ENCODE measurements at regions of chr1 and their contacts with region 1.

Region 1: DNA sequence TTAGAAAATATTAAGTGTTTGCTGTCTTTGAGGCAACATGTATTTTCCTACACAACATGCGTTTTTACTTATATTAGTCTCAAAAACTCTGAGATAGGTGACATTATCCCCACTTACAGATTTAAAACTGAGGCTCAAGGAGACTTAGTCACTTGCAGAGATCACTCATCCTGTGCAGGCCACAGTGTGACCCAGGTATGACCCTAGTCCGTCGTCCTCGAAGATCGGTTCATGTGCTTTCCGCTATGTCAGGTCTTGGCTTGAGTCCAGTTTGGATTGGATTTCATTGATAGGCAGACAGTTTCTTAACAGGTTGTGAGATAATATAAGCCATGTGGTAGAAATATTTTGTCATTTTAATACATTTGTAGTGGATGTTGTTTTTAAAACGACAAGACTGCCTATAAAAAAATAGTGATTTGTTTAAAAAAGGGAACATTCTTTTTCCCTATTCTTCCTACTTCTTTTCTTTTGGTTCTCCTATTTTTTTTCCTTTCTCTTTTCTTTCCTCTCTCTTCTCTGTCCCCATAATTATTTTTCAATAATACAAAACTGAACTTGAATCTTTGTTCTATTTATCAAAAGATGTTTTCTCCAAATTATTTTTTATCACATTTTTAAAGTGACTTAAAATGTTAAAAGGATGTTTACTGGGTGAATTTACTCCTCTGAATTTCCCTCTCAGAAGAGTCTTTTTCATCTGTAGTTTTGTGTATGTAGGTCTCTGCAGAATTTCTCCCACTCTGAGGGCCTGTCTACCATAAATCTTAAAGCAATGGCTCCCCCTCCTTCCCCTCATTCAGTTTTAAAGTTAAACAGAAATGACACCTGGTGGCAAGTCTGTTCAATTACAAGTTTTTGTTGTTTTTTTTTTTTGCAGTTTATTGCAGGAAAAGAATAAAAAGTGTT is 81.8 kb downstream of the PHTF1 start:
- DNase-seq: no peak
- H3K4me3 ChIP-seq: no peak overlapping the region
- H3K27ac ChIP-seq: no peak overlapping the region
- H3K4me1 ChIP-seq: no peaks in the 10 kb centered on the region
- H3K27me3 ChIP-seq: no peaks in the 10 kb centered on the region
- CTCF ChIP-seq: peak; percentile 51 to 62 (median 55)
- POLR2A ChIP-seq: no peak

Region 2: DNA sequence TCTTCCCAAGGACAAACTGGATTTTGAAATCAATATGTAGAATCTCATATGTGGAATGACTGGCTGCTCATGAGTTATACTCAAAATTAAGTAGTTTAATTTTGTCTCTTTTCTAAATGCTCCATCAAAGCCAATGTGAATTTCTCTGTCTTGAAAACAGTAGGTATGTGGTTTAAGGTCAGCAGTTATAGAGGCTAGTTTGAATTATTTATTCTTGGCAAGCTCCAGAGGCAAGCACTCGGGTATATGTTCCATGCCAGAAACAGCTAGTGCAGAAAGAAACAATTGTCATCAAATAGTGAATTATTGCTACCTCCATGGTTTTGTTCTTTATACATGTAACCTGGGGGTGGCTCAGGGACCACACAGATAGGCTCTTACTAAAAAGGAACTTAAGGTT is 541.0 kb before region 1 on chr1:
- intact Hi-C with region 1: loop called (anchors 5 kb)
- DNase-seq: no peak
- H3K4me3 ChIP-seq: no peak overlapping the region
- H3K27ac ChIP-seq: no peak overlapping the region
- H3K4me1 ChIP-seq: peaks cover 8% of the 10 kb centered on the region
- H3K27me3 ChIP-seq: no peaks in the 10 kb centered on the region
- CTCF ChIP-seq: no peak
- POLR2A ChIP-seq: no peak

Region 3: GRCh38 chr1:113917400-113918082 is 240.0 kb after region 1 on chr1:
- intact Hi-C with region 1: no loop called
- DNase-seq: no peak
- H3K4me3 ChIP-seq: no peak overlapping the region
- H3K27ac ChIP-seq: no peak overlapping the region
- H3K4me1 ChIP-seq: no peaks in the 10 kb centered on the region
- H3K27me3 ChIP-seq: no peaks in the 10 kb centered on the region
- CTCF ChIP-seq: no peak
- POLR2A ChIP-seq: no peak

Measured in testis (tissue), 5 donors.